ENCODE measurements at regions of chr12 and their contacts with region 1.

Region 1: DNA sequence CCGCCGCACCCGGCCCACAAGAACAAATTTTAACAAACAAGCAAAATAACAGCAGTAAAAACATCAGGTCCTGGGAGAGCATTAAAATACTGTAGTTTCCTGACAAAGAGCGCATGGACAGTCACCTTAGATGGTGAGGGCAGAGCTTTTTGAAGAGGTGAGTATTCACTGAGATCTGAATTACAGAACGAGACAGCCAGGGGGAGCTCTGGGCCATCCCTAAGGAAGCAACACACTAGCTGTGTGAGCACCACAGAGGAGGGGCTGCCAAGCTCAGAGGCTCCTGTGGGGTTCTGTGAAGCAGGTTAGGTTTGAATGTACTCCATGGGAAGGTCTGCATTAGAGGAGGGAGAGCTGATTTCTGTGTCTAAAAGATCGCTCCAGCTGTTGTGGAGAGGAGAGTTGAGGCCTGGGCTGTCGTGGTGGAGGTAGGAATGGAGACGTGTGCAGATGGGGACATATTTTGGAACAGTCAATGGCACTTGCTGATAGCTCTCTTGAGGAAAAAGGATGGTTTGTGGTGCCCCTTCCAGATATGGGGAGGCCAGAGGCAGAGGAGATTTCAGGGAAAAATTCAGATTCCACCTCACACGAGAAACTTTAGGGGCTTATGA is 72.9 kb downstream of the TRAFD1 start:
- DNase-seq: peak; percentile 87
- ATAC-seq: peak; percentile 100
- H3K4me3 Mint-ChIP-seq: no peak overlapping the region
- H3K27ac Mint-ChIP-seq: peak overlapping the region; percentile 86
- H3K4me1 Mint-ChIP-seq: peaks cover 2% of the 10 kb centered on the region; the same call in 1 of the 2 replicates
- H3K27me3 Mint-ChIP-seq: no peaks in the 10 kb centered on the region
- CTCF ChIP-seq: peak; percentile 71

Region 2: GRCh38 chr12:112097641-112098040 is 100.6 kb before region 1 on chr12:
- CTCF ChIA-PET with region 1: no interaction called
- POLR2A ChIA-PET with region 1: no interaction called
- DNase-seq: no peak
- ATAC-seq: no peak
- H3K4me3 Mint-ChIP-seq: no peak overlapping the region
- H3K27ac Mint-ChIP-seq: no peak overlapping the region
- H3K4me1 Mint-ChIP-seq: no peaks in the 10 kb centered on the region
- H3K27me3 Mint-ChIP-seq: no peaks in the 10 kb centered on the region
- CTCF ChIP-seq: no peak

Region 3: GRCh38 chr12:112125250-112125999 is 72.8 kb before region 1 on chr12 and contains the start of gene TRAFD1:
- CTCF ChIA-PET with region 1: interaction called, 13 read pairs
- POLR2A ChIA-PET with region 1: no interaction called
- DNase-seq: peak; percentile 99
- ATAC-seq: peak; percentile 99
- H3K4me3 Mint-ChIP-seq: peak within 1 kb of the TSS; percentile 78
- H3K27ac Mint-ChIP-seq: no peak within 1 kb of the TSS
- H3K4me1 Mint-ChIP-seq: peaks cover 27% of the 10 kb centered on the region
- H3K27me3 Mint-ChIP-seq: peaks cover 2% of the 10 kb centered on the region; the same call in 1 of the 2 replicates
- CTCF ChIP-seq: no peak
- total RNA-seq, gene TRAFD1: 24.8 to 25.8 TPM (median 25.1 TPM) in 3 replicates

Region 4: DNA sequence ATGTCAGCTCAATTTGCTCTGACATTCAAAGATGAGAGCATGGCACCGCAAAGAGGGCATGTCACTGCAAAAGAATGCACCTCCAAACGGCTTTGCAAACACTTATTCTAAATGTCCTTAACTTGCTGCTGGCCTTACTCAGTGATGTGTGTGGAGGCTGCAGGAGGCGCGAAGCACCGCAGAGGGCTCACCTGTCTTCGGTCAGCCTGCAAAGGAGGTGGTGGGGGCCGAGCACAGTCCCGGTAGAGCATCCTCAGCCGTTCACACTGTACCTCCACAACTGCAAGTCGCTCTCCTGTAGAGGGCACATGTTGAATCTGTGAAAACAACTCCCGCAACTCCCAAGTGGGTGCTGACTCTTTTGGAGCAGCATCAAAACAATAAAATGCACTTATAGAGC is 21.0 kb after region 1 on chr12:
- CTCF ChIA-PET with region 1: interaction called, 17 read pairs
- POLR2A ChIA-PET with region 1: no interaction called
- DNase-seq: peak; percentile 23
- ATAC-seq: peak; percentile 83
- H3K4me3 Mint-ChIP-seq: no peak overlapping the region
- H3K27ac Mint-ChIP-seq: no peak overlapping the region
- H3K4me1 Mint-ChIP-seq: no peaks in the 10 kb centered on the region
- H3K27me3 Mint-ChIP-seq: no peaks in the 10 kb centered on the region
- CTCF ChIP-seq: no peak

Region 5: DNA sequence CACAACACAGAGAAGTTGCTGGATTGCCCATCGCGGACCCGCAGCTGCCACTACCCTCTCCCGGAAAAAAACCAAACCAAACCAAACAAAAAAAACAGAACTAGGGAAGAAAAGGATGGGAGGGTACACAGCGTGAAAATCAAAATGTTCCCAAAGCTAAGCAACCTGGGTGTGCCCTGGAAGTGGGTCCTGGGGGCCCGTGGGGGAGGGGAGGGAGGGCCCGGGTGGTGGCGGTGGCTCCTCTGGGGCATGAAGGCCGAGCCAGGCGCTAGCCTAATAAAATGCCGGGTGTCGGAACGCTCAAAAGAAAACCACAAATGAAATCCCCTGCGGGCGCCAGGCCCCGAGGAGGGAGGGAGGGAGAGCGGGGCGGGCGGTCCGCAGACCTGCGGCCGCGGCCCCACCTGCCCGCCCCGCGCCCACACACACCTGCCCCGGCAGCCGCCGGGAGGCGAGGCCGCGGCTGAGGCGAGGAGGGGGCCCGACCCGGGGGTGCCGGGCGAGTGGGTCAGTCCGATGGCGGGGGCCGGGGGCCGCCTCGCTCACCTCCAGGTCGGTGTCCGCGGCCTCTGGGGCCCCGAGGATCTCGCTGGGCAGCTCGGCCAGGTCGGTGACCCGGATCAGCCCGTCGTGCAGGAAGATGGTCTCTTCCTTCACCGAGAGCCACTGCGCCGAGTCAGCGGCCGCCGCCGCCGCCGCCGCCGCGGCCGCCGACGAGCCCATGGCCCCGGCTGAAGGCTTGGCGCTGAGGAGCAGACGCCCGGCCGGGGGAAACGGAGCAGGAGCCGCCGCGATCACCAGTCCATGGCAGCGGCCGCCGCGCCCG is 183.4 kb after region 1 on chr12:
- CTCF ChIA-PET with region 1: interaction called, 126 read pairs
- POLR2A ChIA-PET with region 1: no interaction called
- DNase-seq: peak; percentile 50
- ATAC-seq: peak; percentile 44
- H3K4me3 Mint-ChIP-seq: peak overlapping the region; percentile 98
- H3K27ac Mint-ChIP-seq: peak overlapping the region; percentile 95
- H3K4me1 Mint-ChIP-seq: peaks cover 18% of the 10 kb centered on the region
- H3K27me3 Mint-ChIP-seq: no peaks in the 10 kb centered on the region
- CTCF ChIP-seq: no peak

Region 6: DNA sequence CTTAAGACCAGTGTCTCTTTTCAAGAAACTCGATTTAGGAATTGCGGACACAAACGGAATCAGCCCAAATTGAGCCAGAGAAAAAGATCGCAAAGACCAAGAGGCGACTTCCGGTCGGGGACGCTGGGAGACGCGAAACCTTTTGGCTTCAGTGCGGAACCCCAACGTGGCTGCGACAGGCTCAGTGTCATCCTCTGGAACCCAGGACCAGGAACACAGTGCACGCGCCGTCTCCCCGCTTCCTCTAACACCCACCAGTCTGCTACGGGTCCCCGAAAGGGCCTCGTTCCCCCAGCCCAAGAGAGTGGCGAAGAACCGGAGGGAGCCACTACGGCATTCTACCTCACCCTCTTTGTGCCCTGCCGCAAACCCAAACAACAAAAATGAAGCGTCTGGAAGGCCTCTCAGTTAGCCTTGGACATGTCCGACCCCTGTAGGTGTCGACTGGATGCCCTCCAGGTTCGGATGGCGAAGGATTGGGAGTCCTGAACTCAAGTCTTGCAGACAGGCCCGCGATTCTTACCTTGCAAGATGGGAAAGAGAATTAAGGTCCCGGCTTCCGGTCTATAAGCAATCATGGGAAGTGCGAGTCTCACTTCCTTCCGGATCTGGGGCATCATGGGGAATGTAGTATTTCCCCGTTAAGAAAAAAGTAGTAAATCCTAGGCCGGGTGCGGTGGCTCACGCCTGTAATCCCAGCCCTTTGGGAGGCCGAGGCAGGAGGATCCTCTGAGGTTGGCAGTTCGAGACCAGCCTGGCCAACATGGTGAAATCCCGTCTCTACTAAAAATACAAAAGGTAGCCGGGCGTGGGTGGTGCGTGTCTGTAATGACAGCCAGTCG is 211.1 kb after region 1 on chr12 and contains the start of gene RPL6:
- CTCF ChIA-PET with region 1: interaction called, 15 read pairs
- POLR2A ChIA-PET with region 1: no interaction called
- DNase-seq: peak; percentile 66
- ATAC-seq: peak; percentile 91
- H3K4me3 Mint-ChIP-seq: peak within 1 kb of the TSS; percentile 100
- H3K27ac Mint-ChIP-seq: peak within 1 kb of the TSS; percentile 100
- H3K4me1 Mint-ChIP-seq: peaks cover 19% of the 10 kb centered on the region
- H3K27me3 Mint-ChIP-seq: peaks cover 4% of the 10 kb centered on the region; the same call in 1 of the 2 replicates
- CTCF ChIP-seq: no peak
- total RNA-seq, gene RPL6: 1,730 to 1,803 TPM (median 1,794 TPM) in 3 replicates